ENCODE measurements at regions of chr14 and their contacts with region 1.

Region 1: GRCh38 chr14:68208218-68208617 is 388.6 kb downstream of the RAD51B start:
- DNase-seq: no peak
- ATAC-seq: no peak
- H3K4me3 ChIP-seq: no peak overlapping the region
- H3K4me3 Mint-ChIP-seq: no peak overlapping the region
- H3K27ac ChIP-seq: no peak overlapping the region
- H3K27ac Mint-ChIP-seq: peak overlapping the region; percentile 34
- H3K4me1 ChIP-seq: peaks cover 15% of the 10 kb centered on the region
- H3K4me1 Mint-ChIP-seq: peaks cover 43% of the 10 kb centered on the region
- H3K27me3 ChIP-seq: no peaks in the 10 kb centered on the region
- H3K27me3 Mint-ChIP-seq: no peaks in the 10 kb centered on the region
- CTCF ChIP-seq: no peak

Region 2: DNA sequence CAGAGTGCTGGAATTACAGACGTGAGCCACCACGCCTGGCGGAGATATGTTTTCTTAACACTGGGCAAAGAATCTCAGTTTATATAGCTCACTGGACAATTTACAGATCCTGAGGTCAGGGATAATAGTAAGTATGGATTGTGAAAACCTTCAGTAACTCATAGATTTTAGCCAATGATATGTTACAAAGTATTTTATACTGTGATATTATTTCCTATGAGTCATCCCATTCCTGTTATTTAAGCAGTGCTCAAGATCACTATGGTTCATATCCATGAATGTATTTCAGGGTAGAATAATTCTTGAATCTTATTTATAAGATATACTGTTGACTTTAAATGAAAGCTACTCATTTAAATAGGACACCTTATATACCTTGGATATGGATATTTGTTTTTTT is 281.4 kb before region 1 on chr14:
- CTCF ChIA-PET with region 1: no interaction called
- POLR2A ChIA-PET with region 1: interaction called, 12 read pairs
- intact Hi-C with region 1: no loop called
- DNase-seq: no peak
- ATAC-seq: no peak
- H3K4me3 ChIP-seq: no peak overlapping the region
- H3K4me3 Mint-ChIP-seq: no peak overlapping the region
- H3K27ac ChIP-seq: no peak overlapping the region
- H3K27ac Mint-ChIP-seq: no peak overlapping the region
- H3K4me1 ChIP-seq: no peaks in the 10 kb centered on the region
- H3K4me1 Mint-ChIP-seq: no peaks in the 10 kb centered on the region
- H3K27me3 ChIP-seq: no peaks in the 10 kb centered on the region
- H3K27me3 Mint-ChIP-seq: no peaks in the 10 kb centered on the region
- CTCF ChIP-seq: no peak

Measured in CD8-positive, alpha-beta T cell (primary cell).